AG04449 (cell line): ENCODE measurements at regions of chr3 and their contacts with region 1.

Region 1: DNA sequence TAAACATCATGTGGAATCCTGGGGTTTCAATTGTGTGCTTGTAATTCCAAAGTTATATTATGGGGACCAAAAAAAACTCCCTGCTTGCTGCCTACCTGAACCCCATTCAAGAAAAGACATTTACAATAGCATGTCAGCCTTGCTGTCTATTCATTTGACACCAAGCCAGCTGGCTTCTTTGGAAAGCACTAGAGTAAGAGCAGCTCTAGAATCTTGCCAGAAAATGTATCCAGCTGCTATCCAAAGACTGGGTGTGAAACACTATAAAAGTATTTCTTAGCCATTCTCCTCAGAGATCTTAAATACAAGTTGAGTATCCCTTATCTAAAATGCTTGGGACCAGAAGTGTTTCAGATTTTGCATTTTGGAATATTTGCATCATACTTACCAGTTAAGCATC is 87.4 kb downstream of the RAD18 start:
- DNase-seq: no peak
- H3K4me3 ChIP-seq: no peak overlapping the region
- CTCF ChIP-seq: no peak

Region 2: DNA sequence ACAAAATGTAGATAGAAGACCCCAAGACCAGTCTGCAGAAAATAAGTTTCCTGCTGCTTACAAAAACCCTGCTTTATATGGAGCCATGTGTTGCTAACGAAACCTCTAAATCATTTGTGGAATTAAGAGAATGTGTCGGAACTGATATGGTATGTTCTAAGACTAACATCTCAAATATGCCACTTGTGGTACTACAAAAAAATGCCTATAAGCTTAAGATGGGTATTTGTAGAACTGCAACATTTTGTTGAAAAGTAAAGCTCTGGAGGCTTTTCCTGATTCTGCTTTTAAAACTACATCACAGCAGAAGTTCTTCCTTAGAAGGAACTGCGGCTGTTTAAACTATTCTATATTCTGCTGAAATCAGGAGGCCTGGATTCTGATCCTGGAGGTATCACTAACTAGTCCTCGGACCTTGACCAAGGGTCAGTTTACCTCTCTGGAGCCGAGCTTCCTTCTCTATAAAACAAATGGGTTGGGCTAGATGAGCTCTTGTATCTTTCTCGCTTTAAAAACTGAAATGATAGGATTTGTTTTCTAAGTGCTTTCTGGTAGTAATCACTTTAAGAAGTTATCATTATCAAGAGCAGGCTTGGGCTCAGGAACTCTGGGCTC is 12.6 kb after region 1 on chr3:
- CTCF ChIA-PET with region 1: interaction called, 16 read pairs
- POLR2A ChIA-PET with region 1: interaction called, 4 read pairs
- DNase-seq: peak; percentile 91
- H3K4me3 ChIP-seq: no peak overlapping the region
- CTCF ChIP-seq: no peak